Activated CD4-positive, alpha-beta T cell treated with anti-CD3 and anti-CD28 coated beads for 36 hours (primary cell): ENCODE measurements at regions of chr1 and their contacts with region 1.

Region 1: GRCh38 chr1:6794164-6794563 is 8.9 kb downstream of the CAMTA1 start:
- DNase-seq: no peak
- ATAC-seq: no peak
- H3K4me3 Mint-ChIP-seq: no peak overlapping the region
- H3K27ac Mint-ChIP-seq: no peak overlapping the region
- H3K4me1 Mint-ChIP-seq: peaks cover 27% of the 10 kb centered on the region
- H3K27me3 Mint-ChIP-seq: no peaks in the 10 kb centered on the region

Region 2: DNA sequence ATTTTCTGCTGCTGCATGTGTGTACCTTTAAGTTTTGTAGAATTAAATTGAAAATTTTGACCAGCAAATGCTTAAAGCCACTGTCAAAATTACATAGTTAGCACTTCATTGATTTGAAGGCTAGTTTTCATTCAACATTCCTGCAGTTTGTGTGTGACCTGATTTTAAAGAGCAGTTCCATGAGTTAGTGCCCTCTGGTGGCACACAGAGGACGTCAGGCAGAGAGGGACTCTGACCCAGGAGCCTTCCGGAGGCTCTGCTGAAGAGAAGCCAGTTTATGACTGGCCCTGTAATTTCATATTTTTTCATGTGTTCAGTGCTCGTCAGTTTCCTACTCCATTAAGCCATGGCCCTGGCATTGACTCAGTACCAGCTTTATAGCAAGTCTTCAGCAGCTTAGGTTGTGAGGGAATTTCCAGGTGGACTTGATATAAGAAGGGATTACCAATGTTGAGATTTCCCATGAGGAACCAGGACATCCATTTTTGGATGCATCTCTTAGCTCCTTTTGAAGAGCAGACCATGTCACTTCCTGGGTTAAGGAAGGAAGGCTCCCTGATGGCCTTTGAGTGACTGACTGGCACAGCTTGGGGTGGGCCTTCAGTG is 95.8 kb after region 1 on chr1:
- CTCF ChIA-PET with region 1: interaction called, 3 read pairs
- POLR2A ChIA-PET with region 1: interaction called, 3 read pairs
- intact Hi-C with region 1: loop called (anchors 1 to 2 kb)
- DNase-seq: peak; percentile 65
- ATAC-seq: peak; percentile 51
- H3K4me3 Mint-ChIP-seq: no peak overlapping the region
- H3K27ac Mint-ChIP-seq: no peak overlapping the region
- H3K4me1 Mint-ChIP-seq: peaks cover under 1% of the 10 kb centered on the region
- H3K27me3 Mint-ChIP-seq: no peaks in the 10 kb centered on the region

Region 3: GRCh38 chr1:7207875-7208646 is 413.9 kb after region 1 on chr1:
- CTCF ChIA-PET with region 1: interaction called, 3 read pairs
- POLR2A ChIA-PET with region 1: no interaction called
- intact Hi-C with region 1: loop called in 1 of 2 experiments (anchors 1 kb)
- DNase-seq: peak; percentile 70
- ATAC-seq: peak; percentile 72
- H3K4me3 Mint-ChIP-seq: no peak overlapping the region
- H3K27ac Mint-ChIP-seq: no peak overlapping the region
- H3K4me1 Mint-ChIP-seq: no peaks in the 10 kb centered on the region
- H3K27me3 Mint-ChIP-seq: peaks cover 36% of the 10 kb centered on the region